ENCODE measurements at regions of chr4 and their contacts with region 1.

Region 1: GRCh38 chr4:184481544-184481943 is 7.2 kb upstream of the IRF2 start:
- DNase-seq: no peak
- H3K4me3 ChIP-seq: no peak overlapping the region
- H3K27ac ChIP-seq: peak overlapping the region in 13 of 59 donors; percentile 12 to 100 (median 97)
- H3K27me3 ChIP-seq: no peaks in the 10 kb centered on the region
- CTCF ChIP-seq: no peak

Region 2: GRCh38 chr4:184163813-184164212 is 317.7 kb before region 1 on chr4:
- intact Hi-C with region 1: no loop called
- DNase-seq: peak; percentile 32 to 83 (median 74)
- H3K4me3 ChIP-seq: no peak overlapping the region
- H3K27ac ChIP-seq: peak overlapping the region in 1 of 59 donors; percentile 1
- H3K27me3 ChIP-seq: no peaks in the 10 kb centered on the region
- CTCF ChIP-seq: peak; percentile 46 to 87 (median 73)

Region 3: GRCh38 chr4:184514121-184514988 is 32.8 kb after region 1 on chr4:
- intact Hi-C with region 1: loop called (anchors 2 to 5 kb)
- DNase-seq: peak in 9 of 10 donors; percentile 38 to 91 (median 75)
- H3K4me3 ChIP-seq: peak overlapping the region in 26 of 59 donors; percentile 1 to 40 (median 16)
- H3K27ac ChIP-seq: peak overlapping the region; percentile 56 to 97 (median 90)
- H3K27me3 ChIP-seq: no peaks in the 10 kb centered on the region
- CTCF ChIP-seq: peak in 1 of 56 donors; percentile 10

Region 4: GRCh38 chr4:184825896-184826690 is 344.5 kb after region 1 on chr4 and contains the start of gene ACSL1:
- intact Hi-C with region 1: no loop called
- DNase-seq: peak; percentile 73 to 91 (median 84)
- H3K4me3 ChIP-seq: peak within 1 kb of the TSS; percentile 56 to 93 (median 77)
- H3K27ac ChIP-seq: peak within 1 kb of the TSS in 58 of 59 donors; percentile 9 to 94 (median 81)
- H3K27me3 ChIP-seq: no peaks in the 10 kb centered on the region
- CTCF ChIP-seq: peak in 4 of 56 donors; percentile 4 to 16 (median 8)
- total RNA-seq, gene ACSL1: 24.4 to 144 (median 53.4) TPM